Left ventricle myocardium inferior (tissue), 1 donor: ENCODE measurements at regions of chr12 and their contacts with region 1.

Region 1: DNA sequence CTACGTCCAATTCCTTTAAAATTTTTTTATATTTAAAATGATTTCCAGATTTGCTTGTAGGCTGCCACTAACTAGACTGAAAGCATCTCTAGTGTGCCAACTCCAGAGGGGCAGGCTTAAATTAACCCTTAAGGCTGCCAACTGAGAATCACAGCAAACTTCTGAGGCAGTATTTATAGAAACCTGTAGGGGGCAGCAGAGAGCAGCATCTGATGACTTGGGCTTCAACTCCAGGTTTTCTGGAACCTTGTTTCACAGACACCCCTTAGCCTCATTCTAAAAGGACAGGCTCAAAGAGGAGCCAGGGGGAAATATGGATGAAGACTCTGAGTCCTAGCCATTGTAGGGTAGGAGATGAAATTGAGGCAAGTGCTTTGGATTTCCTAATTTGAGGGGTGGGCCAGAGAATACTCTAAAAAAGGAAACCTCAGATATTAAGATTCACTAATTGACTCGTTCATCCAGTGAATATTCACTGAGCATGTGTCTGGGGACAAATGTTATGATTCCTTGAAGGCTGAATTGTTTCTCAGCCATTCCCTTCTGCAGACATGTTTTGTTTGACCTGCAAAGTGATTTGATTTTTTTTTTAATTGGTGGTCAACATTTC is 63.3 kb upstream of the HSPB8 start:
- DNase-seq: no peak
- H3K4me3 ChIP-seq: no peak overlapping the region
- H3K27ac ChIP-seq: no peak overlapping the region
- H3K4me1 ChIP-seq: peaks cover 4% of the 10 kb centered on the region
- H3K27me3 ChIP-seq: no peaks in the 10 kb centered on the region
- CTCF ChIP-seq: peak; percentile 94

Region 2: GRCh38 chr12:119060847-119061796 is 54.3 kb before region 1 on chr12:
- intact Hi-C with region 1: no loop called
- DNase-seq: peak; percentile 64
- H3K4me3 ChIP-seq: no peak overlapping the region
- H3K27ac ChIP-seq: no peak overlapping the region
- H3K4me1 ChIP-seq: no peaks in the 10 kb centered on the region
- H3K27me3 ChIP-seq: peaks cover 22% of the 10 kb centered on the region
- CTCF ChIP-seq: no peak

Region 3: DNA sequence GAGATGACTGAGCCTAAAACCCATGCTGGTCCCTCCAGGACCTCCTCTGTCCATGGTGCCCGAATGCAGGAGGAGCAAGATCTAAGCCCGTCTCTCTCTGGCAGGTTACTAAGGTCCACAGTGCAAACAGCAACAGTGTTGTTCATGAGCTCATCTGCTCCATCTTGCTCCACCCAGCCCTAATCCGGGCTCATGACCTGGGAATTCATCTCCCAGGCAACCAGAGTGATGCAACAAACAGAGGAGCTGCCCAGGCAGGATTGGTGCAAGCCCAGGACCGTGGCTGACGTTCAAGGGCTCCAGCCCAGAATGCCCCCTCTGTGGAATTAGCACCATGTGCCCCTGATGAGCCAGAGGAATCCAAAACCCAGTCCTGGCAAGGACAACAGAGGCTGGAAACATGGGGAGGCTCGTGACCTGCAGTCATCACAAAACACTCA is 93.2 kb after region 1 on chr12:
- intact Hi-C with region 1: no loop called
- DNase-seq: peak; percentile 83
- H3K4me3 ChIP-seq: no peak overlapping the region
- H3K27ac ChIP-seq: peak overlapping the region; percentile 84
- H3K4me1 ChIP-seq: peaks cover 47% of the 10 kb centered on the region
- H3K27me3 ChIP-seq: no peaks in the 10 kb centered on the region
- CTCF ChIP-seq: no peak

Region 4: GRCh38 chr12:119406308-119406707 is 290.9 kb after region 1 on chr12:
- intact Hi-C with region 1: loop called (anchors 5 kb)
- DNase-seq: no peak
- H3K4me3 ChIP-seq: no peak overlapping the region
- H3K27ac ChIP-seq: peak overlapping the region; percentile 45
- H3K4me1 ChIP-seq: peaks cover 19% of the 10 kb centered on the region
- H3K27me3 ChIP-seq: no peaks in the 10 kb centered on the region
- CTCF ChIP-seq: no peak